Body of pancreas (tissue), 4 donors: ENCODE measurements at regions of chr1 and their contacts with region 1.

Region 1: DNA sequence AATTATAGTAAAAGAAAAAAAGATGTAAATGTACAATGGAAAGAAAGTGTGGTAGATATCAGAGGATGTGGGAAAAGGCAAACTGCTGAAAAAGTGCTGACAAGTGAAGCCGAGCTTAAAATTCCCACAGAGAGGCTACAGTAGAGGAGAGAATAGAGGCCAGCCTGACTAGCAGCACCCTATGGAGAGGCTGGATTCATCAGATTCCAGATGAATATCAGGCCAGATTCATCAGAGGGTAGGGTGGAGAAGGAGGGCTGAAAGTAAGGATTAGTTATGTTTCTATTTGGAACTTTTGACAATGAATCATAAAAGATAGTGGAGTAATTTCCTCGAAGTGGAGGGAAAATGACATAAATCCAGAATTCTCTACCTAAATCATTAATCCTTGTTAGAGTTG is 60.4 kb upstream of the NEK7 start:
- DNase-seq: no peak
- ATAC-seq: no peak
- H3K4me3 ChIP-seq: no peak overlapping the region
- H3K27ac ChIP-seq: no peak overlapping the region
- H3K4me1 ChIP-seq: no peaks in the 10 kb centered on the region
- H3K27me3 ChIP-seq: no peaks in the 10 kb centered on the region
- CTCF ChIP-seq: no peak
- POLR2A ChIP-seq: no peak

Region 2: GRCh38 chr1:198018529-198018928 is 77.9 kb before region 1 on chr1:
- intact Hi-C with region 1: no loop called
- DNase-seq: no peak
- ATAC-seq: no peak
- H3K4me3 ChIP-seq: no peak overlapping the region
- H3K27ac ChIP-seq: no peak overlapping the region
- H3K4me1 ChIP-seq: no peaks in the 10 kb centered on the region
- H3K27me3 ChIP-seq: no peaks in the 10 kb centered on the region
- CTCF ChIP-seq: no peak
- POLR2A ChIP-seq: no peak

Region 3: DNA sequence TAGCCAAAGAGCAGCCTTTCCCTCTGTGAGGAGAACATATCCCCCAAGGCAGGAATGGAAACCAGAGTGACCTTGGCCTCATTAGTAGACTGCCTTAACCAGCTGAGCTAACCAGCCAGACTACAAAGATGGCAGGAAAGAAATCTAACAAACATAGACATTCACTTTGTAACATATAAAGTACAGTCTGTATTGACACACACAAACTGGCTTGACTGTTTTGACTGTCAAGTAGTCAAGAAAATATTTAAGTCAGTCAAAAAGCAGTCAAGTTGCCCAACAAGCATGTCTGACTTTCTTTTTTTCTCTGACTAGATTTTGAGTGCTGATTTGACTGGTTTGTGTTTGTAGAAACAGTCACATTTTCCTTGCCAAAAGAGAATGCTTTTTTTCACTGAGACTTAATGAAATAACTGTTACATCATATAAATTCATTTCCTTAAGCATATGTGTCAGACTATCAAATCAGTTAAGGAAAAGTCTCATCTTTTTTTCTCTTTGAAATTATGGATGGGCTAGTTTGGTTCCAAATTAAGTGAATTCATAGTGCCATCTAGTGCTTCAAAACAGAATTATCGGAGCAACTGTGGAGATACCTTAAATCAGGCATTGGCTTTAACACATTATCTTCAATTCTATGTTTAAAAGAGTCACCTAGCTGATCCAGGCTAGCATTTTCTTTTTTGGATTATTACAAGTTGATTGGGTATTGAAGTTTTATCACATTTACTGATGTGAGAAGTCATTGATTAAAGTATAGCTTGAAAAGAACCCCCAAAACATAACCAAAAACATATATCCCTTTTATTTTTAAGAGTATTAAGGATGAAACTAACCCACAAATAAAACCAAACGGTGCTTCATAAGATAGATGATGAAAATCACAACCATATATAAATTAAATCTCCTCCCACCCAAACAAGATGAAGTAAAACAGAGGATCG is 369.1 kb after region 1 on chr1:
- intact Hi-C with region 1: loop called (anchors 10 kb)
- DNase-seq: no peak
- ATAC-seq: peak; percentile 63
- H3K4me3 ChIP-seq: no peak overlapping the region
- H3K27ac ChIP-seq: no peak overlapping the region
- H3K4me1 ChIP-seq: no peaks in the 10 kb centered on the region
- H3K27me3 ChIP-seq: no peaks in the 10 kb centered on the region
- CTCF ChIP-seq: peak; percentile 22 to 72 (median 62)
- POLR2A ChIP-seq: no peak